ENCODE measurements at regions of chr18 and their contacts with region 1.

Region 1: GRCh38 chr18:78410094-78410786 is 569.4 kb upstream of the SALL3 start:
- DNase-seq: no peak
- H3K4me3 ChIP-seq: no peak overlapping the region
- H3K27ac ChIP-seq: no peak overlapping the region
- H3K4me1 ChIP-seq: no peaks in the 10 kb centered on the region
- H3K27me3 ChIP-seq: no peaks in the 10 kb centered on the region
- CTCF ChIP-seq: no peak
- EP300 ChIP-seq: no peak
- POLR2A ChIP-seq: no peak

Region 2: DNA sequence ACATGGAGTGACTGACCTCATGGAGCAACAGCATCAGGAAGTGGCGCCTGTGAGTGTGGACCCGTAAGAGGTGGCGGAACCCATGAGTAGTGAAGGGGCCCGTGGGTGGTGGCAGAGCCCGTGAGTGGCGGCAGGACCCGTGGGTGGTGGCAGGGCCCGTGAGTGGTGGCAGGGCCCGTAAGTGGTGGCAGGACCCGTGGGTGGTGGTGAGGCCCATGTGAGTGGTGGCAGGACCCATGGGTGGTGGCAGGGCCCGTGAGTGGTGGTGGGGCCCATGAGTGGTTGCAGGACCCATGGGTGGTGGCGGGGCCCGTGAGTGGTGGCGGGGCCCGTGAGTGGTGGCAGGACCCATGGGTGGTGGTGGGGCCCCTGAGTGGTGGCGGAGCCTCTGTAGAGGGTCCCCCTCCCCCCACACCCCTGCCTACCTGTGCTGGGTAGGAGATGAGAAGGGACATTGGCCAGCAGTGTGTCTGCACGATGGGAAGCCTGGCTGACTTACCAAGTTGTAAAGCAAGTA is 161.6 kb after region 1 on chr18:
- in situ Hi-C with region 1: no loop called
- intact Hi-C with region 1: loop called (anchors 5 kb)
- DNase-seq: no peak
- H3K4me3 ChIP-seq: no peak overlapping the region
- H3K27ac ChIP-seq: no peak overlapping the region
- H3K4me1 ChIP-seq: no peaks in the 10 kb centered on the region
- H3K27me3 ChIP-seq: no peaks in the 10 kb centered on the region
- CTCF ChIP-seq: no peak
- EP300 ChIP-seq: no peak
- POLR2A ChIP-seq: no peak

Region 3: DNA sequence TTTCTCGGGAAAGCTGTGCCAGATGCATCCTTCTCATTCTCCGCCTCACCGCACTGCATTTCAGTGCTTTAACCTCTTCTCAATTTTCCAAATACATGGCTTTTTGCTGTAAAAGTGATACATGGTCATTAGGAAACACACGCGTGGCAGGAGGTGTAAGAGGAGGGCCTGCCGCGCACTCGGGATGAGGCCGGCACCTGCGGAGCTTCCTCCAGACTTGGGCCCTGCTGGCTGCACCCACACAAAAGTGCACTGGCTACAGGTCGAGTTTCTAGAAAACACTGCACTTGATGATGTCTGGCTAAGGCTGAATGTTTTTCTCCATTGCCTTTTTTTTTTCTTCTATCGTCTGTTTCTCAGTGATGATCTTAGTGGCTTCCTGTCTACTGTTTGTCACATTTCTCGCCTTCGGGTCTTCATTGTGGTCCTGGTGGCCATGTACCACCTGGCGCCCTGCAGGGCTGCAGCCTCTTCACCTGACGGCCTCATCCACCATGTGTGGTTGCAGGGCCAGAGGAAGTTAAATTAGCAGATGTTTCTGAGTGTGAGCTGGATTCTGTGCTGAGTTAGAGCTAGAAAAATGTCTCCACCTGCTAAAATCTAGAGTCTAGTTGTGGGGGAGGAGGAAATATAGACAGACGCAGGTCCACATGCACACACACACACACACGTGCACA is 1395.1 kb after region 1 on chr18:
- in situ Hi-C with region 1: no loop called
- intact Hi-C with region 1: no loop called
- DNase-seq: no peak
- H3K4me3 ChIP-seq: no peak overlapping the region
- H3K27ac ChIP-seq: no peak overlapping the region
- H3K4me1 ChIP-seq: no peaks in the 10 kb centered on the region
- H3K27me3 ChIP-seq: peaks cover 4% of the 10 kb centered on the region
- CTCF ChIP-seq: no peak
- EP300 ChIP-seq: no peak
- POLR2A ChIP-seq: no peak